ENCODE measurements at regions of chr7 and their contacts with region 1.

Region 1: DNA sequence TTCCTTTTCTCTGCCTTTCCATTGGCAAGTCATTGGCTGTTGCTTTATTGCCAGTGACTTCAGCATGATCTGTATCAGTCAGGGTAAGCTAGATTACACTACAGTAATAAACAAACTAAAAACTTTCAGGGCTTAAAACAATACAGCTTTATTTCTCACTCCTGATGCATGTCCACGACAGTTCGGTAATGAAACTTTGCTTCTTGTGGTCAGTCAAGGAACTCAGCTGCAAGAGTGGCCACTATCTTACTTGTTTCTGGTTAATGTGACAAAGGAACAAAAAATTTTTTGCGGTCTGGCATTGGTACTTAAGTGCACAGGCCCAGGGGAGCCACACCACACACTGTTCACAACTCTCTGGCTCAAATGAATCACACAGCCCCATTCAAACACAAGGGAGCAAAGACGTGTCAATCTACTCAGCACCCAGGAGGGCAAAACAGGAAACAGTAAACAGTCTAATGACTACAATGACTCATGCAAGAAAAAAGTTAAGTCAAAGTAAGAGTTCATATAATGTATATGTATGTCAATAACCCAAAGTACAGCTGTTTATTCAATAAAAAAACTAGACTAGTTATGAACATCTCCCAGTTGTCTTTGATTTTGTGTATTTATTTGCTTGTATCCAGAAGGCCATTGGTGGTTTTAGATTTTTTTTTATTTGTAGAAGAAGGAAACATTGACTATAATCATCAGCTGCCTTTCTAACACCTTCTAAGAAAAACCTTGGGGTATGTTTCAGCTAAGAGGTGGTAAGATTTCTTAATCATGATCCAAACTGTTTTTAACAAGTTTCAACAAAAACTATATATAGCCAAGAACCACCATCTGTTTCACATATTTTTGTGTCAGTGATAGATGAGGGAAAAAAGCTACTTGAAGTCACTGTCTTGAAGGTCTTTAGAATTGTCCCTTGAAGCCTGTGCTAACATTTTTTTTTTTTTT is 134.4 kb upstream of the FAM3C start:
- DNase-seq: peak; percentile 62
- H3K4me3 Mint-ChIP-seq: peak overlapping the region; percentile 45
- H3K27ac Mint-ChIP-seq: peak overlapping the region; percentile 94
- H3K4me1 Mint-ChIP-seq: peaks cover 40% of the 10 kb centered on the region
- H3K27me3 Mint-ChIP-seq: no peaks in the 10 kb centered on the region

Region 2: DNA sequence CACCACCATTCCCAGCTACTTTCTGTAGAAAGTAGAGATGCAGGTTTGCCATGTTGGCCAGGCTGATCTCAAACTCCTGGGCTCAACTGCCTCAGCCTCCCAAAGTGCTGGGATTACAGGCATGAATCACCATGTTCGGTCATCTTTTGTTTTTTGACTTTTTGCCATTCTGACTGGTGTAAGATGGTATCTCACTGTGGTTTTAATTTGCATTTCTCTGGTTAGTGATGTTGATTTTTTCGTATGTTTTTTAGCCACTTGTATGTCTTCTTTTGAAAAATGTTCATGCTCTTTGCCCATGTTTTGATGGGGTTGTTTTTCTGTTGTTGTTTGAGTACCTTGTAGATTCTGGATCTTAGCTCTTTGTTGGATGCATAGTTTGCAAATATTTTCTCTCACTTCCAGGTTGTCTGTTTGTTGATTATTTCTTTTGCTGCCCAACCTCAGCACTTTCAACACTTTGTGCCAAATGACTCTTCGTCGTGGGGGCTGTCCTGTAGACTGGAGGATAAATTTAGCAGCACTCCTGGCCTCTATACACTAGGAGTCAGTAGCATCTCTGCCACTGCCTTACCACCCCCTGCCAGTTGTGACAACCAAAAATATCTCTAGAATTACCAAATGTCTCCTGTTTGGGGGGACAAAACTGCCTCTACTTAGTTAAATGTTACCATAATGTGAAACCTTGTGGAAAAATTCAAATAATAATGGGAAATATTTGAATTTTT is 548.4 kb before region 1 on chr7:
- intact Hi-C with region 1: loop called (anchors 2 kb)
- DNase-seq: no peak
- H3K4me3 Mint-ChIP-seq: no peak overlapping the region
- H3K27ac Mint-ChIP-seq: peak overlapping the region; percentile 86
- H3K4me1 Mint-ChIP-seq: peaks cover 26% of the 10 kb centered on the region
- H3K27me3 Mint-ChIP-seq: no peaks in the 10 kb centered on the region

Region 3: GRCh38 chr7:121437456-121438127 is 92.9 kb before region 1 on chr7:
- intact Hi-C with region 1: loop called (anchors 1 kb)
- DNase-seq: no peak
- H3K4me3 Mint-ChIP-seq: peak overlapping the region; percentile 55
- H3K27ac Mint-ChIP-seq: peak overlapping the region; percentile 86
- H3K4me1 Mint-ChIP-seq: peaks cover 23% of the 10 kb centered on the region
- H3K27me3 Mint-ChIP-seq: no peaks in the 10 kb centered on the region

Region 4: GRCh38 chr7:121519548-121520521 is 10.7 kb before region 1 on chr7:
- intact Hi-C with region 1: loop called (anchors 1 kb)
- DNase-seq: no peak
- H3K4me3 Mint-ChIP-seq: no peak overlapping the region
- H3K27ac Mint-ChIP-seq: peak overlapping the region; percentile 14
- H3K4me1 Mint-ChIP-seq: peaks cover 31% of the 10 kb centered on the region
- H3K27me3 Mint-ChIP-seq: no peaks in the 10 kb centered on the region